Panc1 (cell line): ENCODE measurements at regions of chr3 and their contacts with region 1.

Region 1: GRCh38 chr3:158104431-158104921 is 1.7 kb downstream of the SHOX2 start:
- DNase-seq: no peak
- ATAC-seq: no peak
- H3K4me3 ChIP-seq: peak overlapping the region; percentile 69 to 79; a peak in 3 of 4 replicates
- H3K27ac ChIP-seq: no peak overlapping the region
- H3K4me1 ChIP-seq: peaks cover 11% of the 10 kb centered on the region
- H3K27me3 ChIP-seq: no peaks in the 10 kb centered on the region
- CTCF ChIP-seq: no peak

Region 2: GRCh38 chr3:157913741-157914150 is 190.7 kb before region 1 on chr3:
- CTCF ChIA-PET with region 1: no interaction called
- POLR2A ChIA-PET with region 1: no interaction called
- in situ Hi-C with region 1: no loop called
- intact Hi-C with region 1: no loop called
- DNase-seq: no peak
- ATAC-seq: no peak
- H3K4me3 ChIP-seq: no peak overlapping the region
- H3K27ac ChIP-seq: no peak overlapping the region
- H3K4me1 ChIP-seq: no peaks in the 10 kb centered on the region
- H3K27me3 ChIP-seq: no peaks in the 10 kb centered on the region
- CTCF ChIP-seq: no peak

Region 3: DNA sequence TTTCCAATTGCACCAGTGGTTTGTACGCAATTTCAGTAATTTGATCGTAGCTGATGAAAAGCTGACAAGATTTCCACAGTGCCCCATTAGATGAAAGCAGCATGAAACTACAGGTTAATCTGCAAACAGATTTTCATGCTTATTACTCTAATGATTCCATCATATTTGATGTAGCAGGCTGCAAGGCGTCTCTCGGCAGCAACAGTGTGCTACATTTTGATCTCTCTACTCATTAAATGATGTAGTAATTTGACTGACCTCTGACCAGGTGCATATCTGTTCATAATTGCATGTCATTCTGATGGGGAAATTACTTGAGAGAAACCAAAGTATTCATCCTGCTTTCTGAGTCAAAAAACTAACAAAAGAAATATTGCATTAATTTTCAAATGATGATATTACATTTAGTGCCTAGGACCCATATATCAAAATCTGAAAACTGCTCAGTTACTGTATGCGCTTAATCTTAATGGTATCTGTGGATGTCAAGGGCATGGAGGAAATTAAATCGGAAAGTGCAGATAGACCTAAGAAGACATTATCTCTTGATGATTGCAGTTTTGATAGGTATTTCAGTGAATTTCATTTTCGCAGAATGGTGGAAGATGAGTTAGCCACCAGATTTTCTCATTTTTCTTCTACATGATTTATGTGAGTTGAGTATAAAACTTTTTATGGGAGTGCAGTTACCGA is 203.9 kb after region 1 on chr3:
- CTCF ChIA-PET with region 1: interaction called, 8 read pairs
- POLR2A ChIA-PET with region 1: interaction called, 11 read pairs
- in situ Hi-C with region 1: no loop called
- intact Hi-C with region 1: loop called (anchors 10 kb)
- DNase-seq: no peak
- ATAC-seq: no peak
- H3K4me3 ChIP-seq: no peak overlapping the region
- H3K27ac ChIP-seq: no peak overlapping the region
- H3K4me1 ChIP-seq: no peaks in the 10 kb centered on the region
- H3K27me3 ChIP-seq: no peaks in the 10 kb centered on the region
- CTCF ChIP-seq: no peak